ENCODE measurements at regions of chr11 and their contacts with region 1.

Region 1: GRCh38 chr11:12693479-12694181 is 19.4 kb downstream of the TEAD1 start:
- DNase-seq: peak; percentile 99
- H3K4me3 ChIP-seq: peak overlapping the region in 1 of 3 experiments; percentile 28
- H3K27ac ChIP-seq: peak overlapping the region; percentile 95
- H3K4me1 ChIP-seq: peaks cover 54% of the 10 kb centered on the region
- H3K27me3 ChIP-seq: no peaks in the 10 kb centered on the region
- CTCF ChIP-seq: no peak
- POLR2A ChIP-seq: peak; percentile 28

Region 2: DNA sequence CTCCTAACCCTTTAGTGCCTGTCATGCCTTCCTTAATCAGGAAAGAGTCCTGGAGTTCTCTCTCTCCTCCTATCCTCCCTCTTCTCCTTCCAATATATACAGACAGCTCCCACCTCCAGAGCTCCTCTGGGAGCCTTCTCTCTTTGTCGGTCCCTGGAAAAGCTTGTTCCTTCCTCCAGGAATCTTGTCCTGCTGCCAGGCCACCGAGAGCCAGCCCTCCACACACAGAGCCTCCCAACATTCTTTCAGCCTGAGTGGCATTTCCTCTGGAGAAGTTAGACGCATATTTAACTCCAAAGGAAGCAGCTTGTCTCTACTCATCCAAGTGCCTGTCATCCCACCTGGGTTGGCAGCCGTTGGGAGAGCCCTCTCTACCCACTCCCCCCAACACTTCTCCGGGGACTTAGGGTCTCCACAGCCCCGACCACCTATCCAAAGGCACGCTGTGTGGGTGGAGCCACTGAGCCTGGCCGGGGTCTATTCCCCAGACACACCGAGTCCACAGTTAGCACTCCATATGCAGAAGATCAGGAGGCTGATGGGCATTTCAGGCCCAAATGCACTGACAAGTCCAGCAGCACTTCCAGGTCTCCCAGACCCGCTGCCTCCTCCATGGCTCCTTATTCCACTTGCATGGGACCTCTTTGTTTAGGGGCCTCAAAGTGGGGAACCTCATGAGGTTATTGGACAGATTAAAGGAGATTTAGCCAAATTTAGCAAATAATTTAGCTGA is 716.3 kb before region 1 on chr11:
- CTCF ChIA-PET with region 1: no interaction called
- POLR2A ChIA-PET with region 1: no interaction called
- dilution Hi-C with region 1: no loop called
- intact Hi-C with region 1: loop called (anchors 10 kb)
- DNase-seq: peak; percentile 95
- H3K4me3 ChIP-seq: no peak overlapping the region
- H3K27ac ChIP-seq: peak overlapping the region; percentile 95
- H3K4me1 ChIP-seq: peaks cover 55% of the 10 kb centered on the region
- H3K27me3 ChIP-seq: no peaks in the 10 kb centered on the region
- CTCF ChIP-seq: no peak
- POLR2A ChIP-seq: peak; percentile 51

Region 3: DNA sequence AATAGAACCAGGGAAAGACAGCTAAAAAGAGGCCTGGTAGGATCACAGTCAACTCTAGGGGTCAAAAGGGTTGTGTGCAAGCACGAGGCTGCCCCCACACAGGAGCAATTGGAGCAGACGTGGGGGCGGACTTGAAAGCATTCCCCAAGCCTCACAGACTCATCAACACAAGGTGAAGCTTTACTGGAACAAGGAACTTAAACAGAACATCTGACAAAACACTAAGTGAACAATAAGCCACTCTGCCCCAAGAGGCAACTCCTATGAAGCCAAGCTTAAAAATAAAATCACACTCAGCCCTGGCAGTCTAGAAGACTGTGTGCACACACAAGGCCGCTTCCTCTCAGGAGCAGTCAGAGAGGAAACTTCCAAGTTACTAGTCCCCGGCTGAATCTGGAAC is 51.6 kb before region 1 on chr11:
- CTCF ChIA-PET with region 1: no interaction called
- POLR2A ChIA-PET with region 1: no interaction called
- dilution Hi-C with region 1: no loop called
- intact Hi-C with region 1: no loop called
- DNase-seq: peak; percentile 59
- H3K4me3 ChIP-seq: no peak overlapping the region
- H3K27ac ChIP-seq: no peak overlapping the region
- H3K4me1 ChIP-seq: peaks cover 2% of the 10 kb centered on the region
- H3K27me3 ChIP-seq: peaks cover 0 to 2% of the 10 kb centered on the region in 2 experiments
- CTCF ChIP-seq: no peak
- POLR2A ChIP-seq: no peak

Region 4: DNA sequence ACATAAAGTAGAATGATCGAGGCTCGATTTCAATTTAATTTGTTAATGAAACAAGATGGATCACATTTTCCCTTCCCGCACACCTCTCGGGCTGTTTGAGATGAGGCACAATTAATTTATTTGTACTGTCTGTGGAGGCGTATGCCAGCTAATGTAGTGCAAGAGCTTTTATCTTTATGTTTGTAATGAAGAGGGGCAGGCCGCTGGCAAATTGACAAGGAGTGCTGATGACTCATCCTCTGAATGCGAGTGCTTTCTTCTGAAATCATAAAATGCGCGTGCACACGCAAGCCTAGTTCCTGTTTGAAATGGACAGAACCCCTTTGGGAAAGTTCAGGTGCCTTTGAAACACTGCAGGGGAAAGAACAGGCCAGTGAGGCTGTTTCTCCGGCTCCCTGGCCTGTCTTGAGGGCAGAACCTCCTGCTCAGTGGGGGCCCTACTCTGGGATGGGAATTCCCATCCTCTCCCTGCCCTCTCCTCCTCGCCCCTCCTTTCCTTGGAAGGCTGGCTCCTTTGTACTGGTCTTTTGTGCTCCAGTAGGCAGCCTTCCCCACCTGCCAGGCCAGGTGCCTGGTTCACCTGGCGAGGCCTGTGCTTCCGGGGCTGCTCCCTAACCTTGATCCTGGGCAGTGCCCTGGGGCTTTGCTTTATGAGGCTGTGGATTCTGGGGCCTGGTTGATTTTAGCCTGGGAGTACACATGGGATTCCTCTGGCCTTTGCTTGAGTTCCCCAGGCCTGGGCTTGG is 30.8 kb after region 1 on chr11:
- CTCF ChIA-PET with region 1: interaction called, 4 read pairs
- POLR2A ChIA-PET with region 1: interaction called, 3 read pairs
- dilution Hi-C with region 1: no loop called
- intact Hi-C with region 1: loop called (anchors 1 kb)
- DNase-seq: peak; percentile 96
- H3K4me3 ChIP-seq: no peak overlapping the region
- H3K27ac ChIP-seq: peak overlapping the region; percentile 78
- H3K4me1 ChIP-seq: peaks cover 43% of the 10 kb centered on the region
- H3K27me3 ChIP-seq: no peaks in the 10 kb centered on the region
- CTCF ChIP-seq: no peak
- POLR2A ChIP-seq: no peak

Region 5: DNA sequence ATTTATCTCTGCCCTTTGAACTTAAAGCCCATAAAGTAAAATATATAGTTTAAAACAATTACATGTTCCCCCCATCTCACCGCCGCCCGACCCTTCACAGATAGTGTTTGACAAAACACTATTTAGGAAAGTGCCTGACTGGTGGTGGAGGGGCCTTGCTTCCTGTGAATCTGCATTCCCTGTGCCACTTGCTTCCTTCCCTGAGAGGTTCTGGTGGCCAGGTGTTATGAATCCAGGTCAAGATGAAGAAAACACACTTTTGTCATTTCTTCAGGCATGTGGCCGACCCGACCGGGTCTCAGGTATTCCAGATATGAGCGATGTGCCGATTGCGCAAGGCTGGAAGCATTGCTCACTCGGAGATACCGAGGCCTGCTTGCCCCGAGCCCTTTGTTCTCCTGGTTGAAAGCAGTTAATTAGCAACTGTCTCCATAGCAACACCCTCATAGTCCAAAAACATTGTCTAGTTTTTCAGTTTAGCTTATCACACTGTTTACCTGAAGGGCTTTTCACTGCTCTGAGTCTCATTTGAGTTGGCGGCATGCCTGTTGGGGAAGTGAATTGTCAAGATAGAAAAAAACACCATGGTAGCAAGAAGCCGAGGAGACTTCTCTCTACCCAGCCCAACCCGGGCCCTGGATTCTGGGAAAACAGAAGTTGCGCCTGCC is 108.9 kb after region 1 on chr11:
- CTCF ChIA-PET with region 1: no interaction called
- POLR2A ChIA-PET with region 1: no interaction called
- dilution Hi-C with region 1: no loop called
- intact Hi-C with region 1: loop called (anchors 1 kb)
- DNase-seq: peak; percentile 98
- H3K4me3 ChIP-seq: no peak overlapping the region
- H3K27ac ChIP-seq: peak overlapping the region; percentile 72
- H3K4me1 ChIP-seq: peaks cover 33% of the 10 kb centered on the region
- H3K27me3 ChIP-seq: no peaks in the 10 kb centered on the region
- CTCF ChIP-seq: no peak
- POLR2A ChIP-seq: no peak

Region 6: GRCh38 chr11:12827929-12828812 is 134.5 kb after region 1 on chr11:
- CTCF ChIA-PET with region 1: interaction called, 4 read pairs
- POLR2A ChIA-PET with region 1: no interaction called
- dilution Hi-C with region 1: no loop called
- intact Hi-C with region 1: loop called (anchors 1 kb)
- DNase-seq: peak; percentile 91
- H3K4me3 ChIP-seq: peak overlapping the region; percentile 24 to 84 (median 63)
- H3K27ac ChIP-seq: peak overlapping the region; percentile 52
- H3K4me1 ChIP-seq: peaks cover 43% of the 10 kb centered on the region
- H3K27me3 ChIP-seq: no peaks in the 10 kb centered on the region
- CTCF ChIP-seq: no peak
- POLR2A ChIP-seq: peak; percentile 73

Region 7: GRCh38 chr11:12864316-12865156 is 170.9 kb after region 1 on chr11:
- CTCF ChIA-PET with region 1: interaction called, 3 read pairs
- POLR2A ChIA-PET with region 1: no interaction called
- dilution Hi-C with region 1: no loop called
- intact Hi-C with region 1: loop called (anchors 1 kb)
- DNase-seq: peak; percentile 97
- H3K4me3 ChIP-seq: no peak overlapping the region
- H3K27ac ChIP-seq: peak overlapping the region; percentile 32
- H3K4me1 ChIP-seq: peaks cover 7% of the 10 kb centered on the region
- H3K27me3 ChIP-seq: no peaks in the 10 kb centered on the region
- CTCF ChIP-seq: no peak
- POLR2A ChIP-seq: no peak